Common myeloid progenitor, CD34-positive (primary cell): ENCODE measurements at regions of chr15 and their contacts with region 1.

Region 1: DNA sequence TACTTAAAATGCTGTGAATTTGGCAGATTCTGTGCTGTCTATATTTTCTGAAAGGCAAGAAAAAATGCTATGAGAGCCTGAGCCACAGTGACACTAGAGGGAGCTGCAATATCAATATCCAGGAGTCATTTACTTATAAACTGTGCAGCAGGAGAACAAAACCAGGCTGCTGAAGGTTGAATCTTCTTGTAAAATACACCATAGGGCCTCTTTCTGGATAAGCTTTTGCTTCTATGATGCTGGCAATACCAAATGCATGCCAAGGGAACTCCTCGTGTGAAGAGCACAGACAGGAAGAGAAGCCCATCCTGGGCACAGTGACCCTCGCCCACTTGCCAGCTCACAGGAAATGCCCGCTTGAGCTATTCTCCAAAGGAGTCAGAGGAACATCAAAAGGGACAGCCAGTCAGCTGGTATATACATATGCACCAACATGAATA is 48.0 kb upstream of the TSPAN3 start:
- DNase-seq: peak; percentile 70 to 86 (median 81)
- H3K4me3 ChIP-seq: no peak overlapping the region
- H3K27ac ChIP-seq: no peak overlapping the region
- H3K4me1 ChIP-seq: peaks cover 0 to 4% (median 1%) of the 10 kb centered on the region in 4 experiments
- H3K27me3 ChIP-seq: no peaks in the 10 kb centered on the region

Region 2: GRCh38 chr15:77107531-77108355 is 11.2 kb before region 1 on chr15:
- CTCF ChIA-PET with region 1: interaction called, 30 read pairs
- POLR2A ChIA-PET with region 1: no interaction called
- DNase-seq: peak; percentile 20 to 52 (median 32)
- H3K4me3 ChIP-seq: no peak overlapping the region
- H3K27ac ChIP-seq: no peak overlapping the region
- H3K4me1 ChIP-seq: no peaks in the 10 kb centered on the region
- H3K27me3 ChIP-seq: no peaks in the 10 kb centered on the region

Region 3: GRCh38 chr15:77186594-77187011 is 67.7 kb after region 1 on chr15:
- CTCF ChIA-PET with region 1: interaction called, 43 read pairs
- POLR2A ChIA-PET with region 1: no interaction called
- DNase-seq: peak; percentile 70 to 86 (median 83)
- H3K4me3 ChIP-seq: no peak overlapping the region
- H3K27ac ChIP-seq: peak overlapping the region in 1 of 2 experiments; percentile 77
- H3K4me1 ChIP-seq: peaks cover 25 to 59% (median 42%) of the 10 kb centered on the region in 4 experiments
- H3K27me3 ChIP-seq: no peaks in the 10 kb centered on the region

Region 4: DNA sequence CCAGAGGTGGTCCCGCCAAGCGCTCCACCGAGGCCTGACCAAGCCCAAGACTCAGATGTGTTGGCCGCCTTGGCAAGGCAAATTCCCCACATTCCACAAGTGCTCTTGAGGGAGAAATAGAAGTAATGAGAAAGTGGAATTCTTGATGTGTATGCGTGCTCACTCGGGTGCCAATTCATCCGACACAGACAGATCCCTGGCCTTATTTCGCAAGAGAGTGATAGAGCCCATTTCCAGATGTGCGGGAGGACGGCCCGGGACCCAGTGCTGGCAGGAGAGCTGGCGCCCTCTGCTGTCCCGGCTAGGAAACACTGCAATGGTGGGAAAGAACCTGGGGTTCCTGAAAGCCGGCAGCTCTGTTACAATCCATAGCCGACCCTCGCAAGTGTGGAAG is 377.8 kb after region 1 on chr15:
- CTCF ChIA-PET with region 1: interaction called, 30 read pairs
- POLR2A ChIA-PET with region 1: no interaction called
- DNase-seq: peak; percentile 72 to 80 (median 76)
- H3K4me3 ChIP-seq: no peak overlapping the region
- H3K27ac ChIP-seq: no peak overlapping the region
- H3K4me1 ChIP-seq: peaks cover 0 to 27% (median 25%) of the 10 kb centered on the region in 4 experiments
- H3K27me3 ChIP-seq: peaks cover 0 to 5% (median 0%) of the 10 kb centered on the region in 5 experiments

Region 5: DNA sequence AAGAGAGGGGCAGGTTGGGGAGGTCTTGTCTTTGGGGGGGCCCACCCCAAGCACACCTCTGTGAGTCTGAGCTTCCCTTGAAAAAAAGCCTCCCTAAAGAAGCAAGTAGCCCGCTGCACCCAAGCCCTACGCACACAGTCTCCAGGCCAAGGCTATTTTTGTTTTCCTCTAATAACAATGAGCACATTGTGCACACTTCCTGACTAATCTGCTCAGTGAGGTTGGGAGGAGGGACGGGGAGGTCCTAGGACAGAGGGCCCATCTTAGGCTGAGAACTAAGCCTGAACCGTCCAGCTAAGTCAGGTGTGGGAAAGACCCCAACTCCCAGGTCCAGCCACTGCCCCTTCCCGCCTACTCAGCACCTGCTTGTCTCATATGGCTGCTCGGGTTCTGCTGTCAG is 389.0 kb after region 1 on chr15:
- CTCF ChIA-PET with region 1: interaction called, 11 read pairs
- POLR2A ChIA-PET with region 1: no interaction called
- DNase-seq: peak in 2 of 3 donors; percentile 19 to 29
- H3K4me3 ChIP-seq: peak overlapping the region in 2 of 7 experiments; percentile 14 to 29
- H3K27ac ChIP-seq: no peak overlapping the region
- H3K4me1 ChIP-seq: peaks cover 0 to 25% (median 22%) of the 10 kb centered on the region in 4 experiments
- H3K27me3 ChIP-seq: peaks cover 0 to 89% (median 24%) of the 10 kb centered on the region in 5 experiments